Adrenal gland (tissue), 19 donors: ENCODE measurements at regions of chr2 and their contacts with region 1.

Region 1: DNA sequence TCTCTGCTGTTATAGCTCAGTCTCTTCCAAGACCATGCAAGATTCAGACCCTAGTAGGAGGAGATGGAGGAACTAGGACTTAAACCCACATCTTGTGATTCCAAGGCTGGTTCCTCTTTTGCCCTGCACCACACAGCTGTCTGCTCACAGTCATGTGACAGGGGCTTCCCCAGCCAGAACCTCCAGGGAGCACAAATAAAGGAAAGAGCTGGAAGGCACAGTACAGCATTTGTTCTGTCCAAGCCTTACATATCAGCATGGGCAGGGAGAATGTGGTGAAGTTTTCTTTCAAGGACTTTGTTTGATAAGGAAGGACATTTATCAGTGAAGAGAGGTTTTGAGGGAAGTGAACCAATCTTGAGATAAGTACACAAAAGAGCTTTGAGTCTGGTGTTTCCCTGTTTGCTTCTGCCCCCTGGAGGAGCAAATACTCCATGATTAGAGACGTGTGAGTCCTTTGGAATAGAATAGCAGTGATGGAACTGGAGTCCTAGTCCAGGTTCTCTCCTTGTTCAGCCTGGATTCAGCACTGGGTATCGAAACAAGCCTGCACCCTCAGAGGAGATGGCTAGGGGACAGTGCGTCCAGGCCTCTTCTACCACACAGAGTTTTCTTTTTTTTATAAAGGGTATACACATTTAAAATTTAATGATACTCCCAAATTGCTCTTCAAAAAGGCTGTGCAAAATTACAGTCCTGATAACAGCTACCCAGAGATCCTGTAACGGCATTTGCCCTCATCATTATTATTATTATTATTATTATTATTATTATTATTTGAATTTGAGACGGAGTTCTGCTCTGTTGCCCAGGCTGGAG is 24.6 kb upstream of the CASP10 start:
- DNase-seq: peak; percentile 80 to 93 (median 87)
- H3K4me3 ChIP-seq: peak overlapping the region in 1 of 4 donors; percentile 4
- H3K27ac ChIP-seq: peak overlapping the region; percentile 56 to 86 (median 72)
- H3K4me1 ChIP-seq: peaks cover 18 to 37% of the 10 kb centered on the region in 2 donors
- H3K27me3 ChIP-seq: no peaks in the 10 kb centered on the region
- CTCF ChIP-seq: peak; percentile 57 to 93 (median 82)
- POLR2A ChIP-seq: peak; percentile 34 to 81

Region 2: DNA sequence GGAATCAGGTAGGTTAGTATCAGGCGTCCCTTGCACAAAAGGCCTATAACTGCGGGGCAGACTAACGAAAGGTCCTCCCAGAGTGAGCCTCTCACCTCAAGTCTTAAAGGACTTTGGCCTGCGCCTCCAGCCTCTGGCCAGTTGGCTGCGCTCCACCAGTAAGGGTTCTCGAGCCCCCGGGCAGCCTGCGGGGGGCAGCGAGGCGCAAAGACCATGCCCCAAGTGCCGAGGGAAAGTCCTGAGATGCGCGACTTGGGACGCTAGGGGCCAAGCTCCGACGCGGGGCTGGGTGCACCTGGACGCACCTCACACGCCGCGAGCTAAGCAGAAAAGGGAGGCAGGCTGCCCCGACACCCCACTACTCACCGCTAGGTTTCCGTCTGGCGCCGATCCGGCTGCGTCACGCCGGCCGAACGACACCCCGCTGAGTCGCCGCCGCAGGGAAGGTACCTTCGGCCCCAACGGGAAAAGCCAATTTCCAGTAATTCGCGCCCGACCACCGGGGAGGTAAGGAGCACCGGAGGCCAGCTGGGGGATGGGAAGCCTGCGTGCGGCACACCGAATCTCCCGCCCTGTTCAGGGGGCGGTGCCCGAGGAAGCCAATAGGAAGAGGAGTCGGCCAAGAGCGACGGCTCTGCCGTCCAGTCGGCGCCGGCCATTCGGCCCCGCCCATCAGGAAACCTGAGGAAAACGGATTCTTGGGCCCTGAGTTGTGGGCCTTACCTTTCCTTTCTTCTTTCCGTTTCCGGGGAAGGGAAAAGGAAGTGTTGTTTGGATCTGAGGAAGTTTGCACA is 195.0 kb before region 1 on chr2 and contains the start of gene ORC2:
- intact Hi-C with region 1: loop called in 1 of 2 experiments (anchors 10 kb)
- DNase-seq: peak; percentile 95 to 98 (median 96)
- H3K4me3 ChIP-seq: peak within 1 kb of the TSS; percentile 71 to 96 (median 94)
- H3K27ac ChIP-seq: peak within 1 kb of the TSS; percentile 62 to 94 (median 88)
- H3K4me1 ChIP-seq: peaks cover 17 to 31% of the 10 kb centered on the region in 2 donors
- H3K27me3 ChIP-seq: no peaks in the 10 kb centered on the region
- CTCF ChIP-seq: peak; percentile 14 to 91 (median 82)
- POLR2A ChIP-seq: peak in 1 of 2 donors; percentile 48
- total RNA-seq, gene ORC2: 5.0 to 30.7 (median 19.6) TPM

Region 3: DNA sequence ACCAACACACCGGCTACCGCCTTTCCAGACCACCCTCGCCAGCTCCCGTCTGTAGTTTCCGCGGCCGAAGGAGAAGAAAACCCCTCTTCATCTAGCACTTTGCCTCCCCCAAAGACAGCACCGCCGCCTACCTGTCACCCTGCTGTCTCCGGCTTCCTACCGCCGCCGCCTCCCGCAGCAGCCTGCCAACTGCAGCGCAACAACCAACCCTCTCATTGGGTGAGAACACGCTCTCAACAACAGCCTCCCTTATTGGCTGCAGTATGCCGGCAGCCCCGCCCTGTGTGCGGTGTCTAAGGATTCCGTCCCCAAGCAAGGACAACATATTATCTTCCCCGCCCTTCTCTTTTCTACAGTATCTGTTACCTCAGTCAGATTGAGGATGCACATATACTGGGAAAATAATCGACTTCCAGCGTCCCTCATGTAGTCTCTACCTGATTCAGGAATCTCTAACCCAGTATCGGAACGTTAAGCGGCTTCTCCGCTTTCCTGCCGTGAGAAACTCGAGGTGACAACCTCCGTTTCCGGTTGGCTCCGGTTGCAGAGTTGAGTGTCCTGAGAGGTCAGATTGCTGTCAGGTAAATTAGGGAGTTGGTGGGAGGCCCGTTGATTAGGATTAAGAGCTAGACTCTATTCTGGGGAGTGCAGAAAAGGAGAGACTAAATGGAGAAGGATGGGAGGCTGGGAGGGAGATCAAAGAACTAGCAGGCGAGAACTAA is 86.7 kb before region 1 on chr2 and contains the starts of genes HYCC2 and NDUFB3:
- intact Hi-C with region 1: loop called in 1 of 2 experiments (anchors 5 kb)
- DNase-seq: peak; percentile 92 to 97 (median 94)
- H3K4me3 ChIP-seq: peak within 1 kb of the TSS; percentile 81 to 98 (median 92)
- H3K27ac ChIP-seq: peak within 1 kb of the TSS; percentile 73 to 96 (median 82)
- H3K4me1 ChIP-seq: peaks cover 32 to 53% of the 10 kb centered on the region in 2 donors
- H3K27me3 ChIP-seq: no peaks in the 10 kb centered on the region
- CTCF ChIP-seq: peak in 4 of 6 experiments; percentile 10 to 39 (median 28)
- POLR2A ChIP-seq: peak; percentile 31 to 87
- total RNA-seq, gene HYCC2: 5.8 to 36.6 (median 22.2) TPM
- total RNA-seq, gene NDUFB3: 34.5 to 193 (median 102) TPM

Region 4: GRCh38 chr2:201118121-201118960 is 40.0 kb before region 1 on chr2:
- intact Hi-C with region 1: loop called in 1 of 2 experiments (anchors 5 kb)
- DNase-seq: peak; percentile 85 to 96 (median 93)
- H3K4me3 ChIP-seq: peak overlapping the region; percentile 57 to 85 (median 64)
- H3K27ac ChIP-seq: peak overlapping the region; percentile 98 to 100 (median 100)
- H3K4me1 ChIP-seq: peaks cover 33 to 44% of the 10 kb centered on the region in 2 donors
- H3K27me3 ChIP-seq: no peaks in the 10 kb centered on the region
- CTCF ChIP-seq: peak in 5 of 6 experiments; percentile 5 to 48 (median 44)
- POLR2A ChIP-seq: peak in 1 of 2 donors; percentile 87

Region 5: DNA sequence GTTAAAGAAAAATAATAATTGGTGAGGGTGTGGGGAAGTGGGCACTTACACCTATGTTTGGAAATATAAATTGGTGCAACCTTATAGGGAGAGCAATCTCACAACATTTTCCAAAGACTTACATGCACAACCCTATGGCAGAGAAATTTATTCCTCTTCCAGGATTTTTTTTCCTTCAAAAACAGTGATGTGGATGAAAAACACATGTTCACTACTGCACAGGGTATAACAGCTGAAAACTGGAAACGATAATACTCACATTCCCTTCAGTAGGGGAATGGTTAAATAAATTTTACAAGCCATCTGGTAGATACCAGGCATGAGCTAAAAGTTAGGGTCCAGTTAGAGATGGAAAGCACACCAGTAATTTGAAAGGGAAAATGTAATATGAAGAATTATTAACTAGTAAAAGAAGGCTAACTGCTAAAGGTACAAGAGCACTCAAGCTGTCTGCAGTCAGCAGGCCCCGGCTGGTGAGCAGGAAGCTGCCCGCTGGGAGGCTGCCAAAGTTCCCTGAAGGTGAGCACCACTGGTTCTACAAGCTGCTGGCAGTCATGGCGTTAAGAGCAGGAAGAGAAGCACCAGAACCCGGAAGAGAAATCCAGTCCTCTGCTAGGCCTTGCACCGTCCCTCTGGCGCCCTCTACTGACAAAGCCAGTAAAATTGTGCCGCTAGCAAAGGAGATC is 73.6 kb after region 1 on chr2:
- intact Hi-C with region 1: no loop called
- DNase-seq: peak; percentile 86 to 96 (median 93)
- H3K4me3 ChIP-seq: peak overlapping the region in 1 of 4 donors; percentile 27
- H3K27ac ChIP-seq: peak overlapping the region in 2 of 5 donors; percentile 11 to 59
- H3K4me1 ChIP-seq: peaks cover 8 to 37% of the 10 kb centered on the region in 2 donors
- H3K27me3 ChIP-seq: no peaks in the 10 kb centered on the region
- CTCF ChIP-seq: peak; percentile 84 to 92 (median 88)
- POLR2A ChIP-seq: no peak

Region 6: DNA sequence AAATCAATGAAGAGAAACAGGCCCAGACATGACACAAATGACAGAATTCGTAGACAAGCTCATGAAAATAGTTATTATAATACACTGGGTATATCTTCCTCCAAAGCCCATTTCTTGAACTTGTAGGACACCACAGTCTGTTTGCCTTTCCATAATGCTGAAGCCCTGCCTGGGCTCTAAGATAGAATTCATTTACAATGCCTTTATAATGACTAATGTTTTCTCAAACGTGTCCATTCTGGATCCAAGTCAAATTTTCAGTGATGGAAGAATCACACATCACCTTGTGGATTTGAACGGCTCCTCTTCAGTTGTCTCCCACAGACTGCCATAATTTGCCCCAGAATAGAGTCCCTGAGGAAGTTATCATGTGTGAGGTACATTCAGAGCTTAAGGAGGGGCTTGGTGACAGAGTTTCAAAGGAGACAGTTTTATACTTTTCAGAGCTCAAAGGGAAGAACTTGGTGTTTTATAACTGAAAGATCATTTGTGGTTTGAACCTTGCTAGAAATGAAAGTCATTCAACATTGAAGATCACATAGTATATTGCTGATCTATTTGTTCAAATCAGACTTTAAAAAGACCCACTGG is 140.2 kb after region 1 on chr2:
- intact Hi-C with region 1: no loop called
- DNase-seq: no peak
- H3K4me3 ChIP-seq: no peak overlapping the region
- H3K27ac ChIP-seq: no peak overlapping the region
- H3K4me1 ChIP-seq: no peaks in the 10 kb centered on the region
- H3K27me3 ChIP-seq: no peaks in the 10 kb centered on the region
- CTCF ChIP-seq: no peak
- POLR2A ChIP-seq: no peak